ENCODE measurements at regions of chr1 and their contacts with region 1.

Region 1: DNA sequence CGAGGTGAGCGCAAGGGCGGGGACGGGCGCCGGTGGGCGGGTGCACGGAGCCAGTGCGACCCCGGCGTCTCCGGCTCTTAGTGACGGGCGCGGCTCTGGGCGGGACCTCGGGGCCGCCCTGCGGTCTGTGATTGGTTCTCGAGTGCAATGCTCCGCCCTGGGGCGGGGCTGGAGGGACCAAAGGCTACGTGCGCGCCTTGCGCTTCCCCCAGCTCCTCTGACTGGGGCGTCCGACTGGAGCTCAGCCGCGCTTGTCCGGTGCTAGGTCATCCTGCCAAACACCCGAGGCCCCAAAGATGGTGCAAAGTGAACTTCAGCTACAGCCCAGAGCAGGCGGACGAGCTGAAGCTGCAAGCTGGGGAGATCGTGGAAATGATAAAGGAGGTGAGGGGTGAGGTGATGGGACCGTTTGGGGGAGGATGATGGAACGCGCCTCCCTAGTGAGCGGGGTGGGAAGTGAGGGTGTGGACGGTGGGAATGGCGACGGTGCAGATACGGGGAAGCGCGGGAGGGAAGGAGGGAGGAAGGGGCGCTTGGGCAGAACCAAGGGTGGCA is 811 bp downstream of the SH3D21 start:
- DNase-seq: peak; percentile 95
- H3K4me3 Mint-ChIP-seq: peak overlapping the region; percentile 95
- H3K27ac Mint-ChIP-seq: peak overlapping the region; percentile 79
- H3K4me1 Mint-ChIP-seq: peaks cover 43% of the 10 kb centered on the region
- H3K27me3 Mint-ChIP-seq: no peaks in the 10 kb centered on the region

Region 2: DNA sequence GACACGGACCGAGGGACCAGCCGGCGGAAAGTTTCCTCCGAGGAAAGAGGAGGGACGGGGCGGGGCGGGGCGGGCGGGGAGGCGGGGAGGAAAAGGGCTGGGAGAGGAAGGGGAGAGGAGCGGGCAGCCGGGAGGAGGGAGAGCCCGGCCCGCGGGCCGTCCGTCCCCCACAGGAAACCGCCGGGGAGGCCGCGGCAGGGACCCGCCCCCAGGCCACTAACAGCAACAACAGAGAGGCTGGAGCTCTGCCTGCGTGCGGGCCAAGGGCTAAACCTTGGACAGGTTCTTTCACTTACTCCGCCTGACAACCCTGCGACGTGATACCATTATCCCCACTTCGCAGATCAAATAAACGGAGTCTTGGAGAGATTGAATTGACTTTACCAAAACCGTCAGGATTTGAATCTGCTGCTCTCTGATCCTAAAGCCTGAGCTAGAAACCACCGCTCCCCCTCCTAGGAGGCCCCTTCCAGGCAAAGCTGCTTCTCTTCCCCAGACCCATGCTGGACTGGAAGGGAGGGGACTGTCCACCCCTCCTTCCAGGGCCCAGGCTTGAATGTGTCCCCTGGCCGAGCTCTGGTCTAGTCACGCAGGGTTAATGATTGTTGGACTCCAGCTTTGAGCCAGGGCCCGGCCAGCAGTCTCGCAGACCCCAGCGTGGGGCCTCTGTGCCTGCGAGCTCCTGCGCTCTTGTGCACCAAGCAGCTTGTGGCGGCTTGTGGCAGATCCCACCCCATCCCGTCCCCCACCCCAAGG is 16.8 kb after region 1 on chr1 and contains the start of gene EVA1B:
- CTCF ChIA-PET with region 1: no interaction called
- POLR2A ChIA-PET with region 1: interaction called, 26 read pairs
- intact Hi-C with region 1: loop called (anchors 1 kb)
- DNase-seq: peak; percentile 77
- H3K4me3 Mint-ChIP-seq: peak within 1 kb of the TSS; percentile 73
- H3K27ac Mint-ChIP-seq: peak within 1 kb of the TSS; percentile 49
- H3K4me1 Mint-ChIP-seq: peaks cover 21% of the 10 kb centered on the region
- H3K27me3 Mint-ChIP-seq: no peaks in the 10 kb centered on the region
- total RNA-seq, gene EVA1B: 11.6 to 12.8 TPM

Region 3: DNA sequence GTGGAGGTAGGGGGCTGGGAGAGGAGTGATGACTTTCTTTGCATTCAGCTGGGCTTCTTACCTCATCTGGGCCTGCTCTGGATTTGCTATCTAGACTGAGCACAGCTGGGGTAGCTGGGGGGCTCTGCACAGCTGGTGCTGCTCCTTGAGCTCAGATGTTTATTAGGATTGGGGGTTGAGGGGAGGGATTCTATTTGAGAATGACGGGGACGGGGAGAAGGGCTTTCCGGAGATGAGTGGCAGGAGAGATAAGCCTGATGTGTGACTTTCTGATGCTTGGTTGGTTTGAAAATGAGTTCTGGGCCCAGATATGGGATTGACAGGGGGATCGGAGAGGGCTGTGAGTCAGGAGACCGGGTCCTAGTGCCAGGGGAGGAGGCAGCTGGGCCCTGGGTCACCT is 321.8 kb after region 1 on chr1:
- CTCF ChIA-PET with region 1: no interaction called
- POLR2A ChIA-PET with region 1: no interaction called
- intact Hi-C with region 1: no loop called
- DNase-seq: no peak
- H3K4me3 Mint-ChIP-seq: no peak overlapping the region
- H3K27ac Mint-ChIP-seq: no peak overlapping the region
- H3K4me1 Mint-ChIP-seq: no peaks in the 10 kb centered on the region
- H3K27me3 Mint-ChIP-seq: peaks cover 1% of the 10 kb centered on the region